CD8-positive, alpha-beta memory T cell (primary cell): ENCODE measurements at regions of chr17 and their contacts with region 1.

Region 1: DNA sequence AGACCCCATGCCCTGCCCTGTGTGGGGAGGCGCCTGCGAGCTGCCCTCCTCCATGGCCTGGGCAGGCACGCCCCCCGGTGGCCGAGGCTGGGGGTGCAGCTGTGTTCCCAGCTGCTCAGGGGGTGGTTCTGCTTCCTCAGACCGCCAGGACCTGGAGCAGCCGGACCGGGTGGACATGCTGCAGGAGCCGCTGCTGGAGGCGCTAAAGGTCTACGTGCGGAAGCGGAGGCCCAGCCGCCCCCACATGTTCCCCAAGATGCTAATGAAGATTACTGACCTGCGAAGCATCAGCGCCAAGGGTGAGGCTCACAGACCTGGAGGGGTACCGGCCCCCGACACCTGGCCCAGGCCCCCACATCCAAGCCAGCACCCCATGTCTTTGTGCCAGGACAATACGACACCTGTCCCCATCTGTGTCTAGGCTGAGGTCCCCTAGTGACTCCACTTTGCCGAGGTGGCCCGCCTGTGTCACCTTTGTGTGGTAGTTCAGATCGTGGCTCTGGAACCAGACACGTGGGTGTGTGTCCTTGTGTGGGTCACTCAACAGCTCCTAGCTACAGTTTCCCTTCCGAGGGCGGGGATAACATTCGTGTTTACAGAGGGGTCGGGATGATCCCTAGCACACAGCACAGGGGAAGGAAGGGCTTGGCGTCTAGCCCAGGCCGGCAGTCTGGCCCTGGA is 9.3 kb downstream of the GJD3 start:
- DNase-seq: peak; percentile 63 to 82 (median 71)
- H3K4me3 ChIP-seq: no peak overlapping the region
- H3K4me3 Mint-ChIP-seq: peak overlapping the region in 1 of 7 donors; percentile 32
- H3K27ac ChIP-seq: no peak overlapping the region
- H3K27ac Mint-ChIP-seq: peak overlapping the region in 6 of 8 donors; percentile 19 to 75 (median 41)
- H3K4me1 ChIP-seq: no peaks in the 10 kb centered on the region
- H3K4me1 Mint-ChIP-seq: peaks cover 14 to 20% (median 17%) of the 10 kb centered on the region in 3 donors
- H3K27me3 ChIP-seq: no peaks in the 10 kb centered on the region
- H3K27me3 Mint-ChIP-seq: peaks cover 0 to 4% of the 10 kb centered on the region in 2 donors

Region 2: DNA sequence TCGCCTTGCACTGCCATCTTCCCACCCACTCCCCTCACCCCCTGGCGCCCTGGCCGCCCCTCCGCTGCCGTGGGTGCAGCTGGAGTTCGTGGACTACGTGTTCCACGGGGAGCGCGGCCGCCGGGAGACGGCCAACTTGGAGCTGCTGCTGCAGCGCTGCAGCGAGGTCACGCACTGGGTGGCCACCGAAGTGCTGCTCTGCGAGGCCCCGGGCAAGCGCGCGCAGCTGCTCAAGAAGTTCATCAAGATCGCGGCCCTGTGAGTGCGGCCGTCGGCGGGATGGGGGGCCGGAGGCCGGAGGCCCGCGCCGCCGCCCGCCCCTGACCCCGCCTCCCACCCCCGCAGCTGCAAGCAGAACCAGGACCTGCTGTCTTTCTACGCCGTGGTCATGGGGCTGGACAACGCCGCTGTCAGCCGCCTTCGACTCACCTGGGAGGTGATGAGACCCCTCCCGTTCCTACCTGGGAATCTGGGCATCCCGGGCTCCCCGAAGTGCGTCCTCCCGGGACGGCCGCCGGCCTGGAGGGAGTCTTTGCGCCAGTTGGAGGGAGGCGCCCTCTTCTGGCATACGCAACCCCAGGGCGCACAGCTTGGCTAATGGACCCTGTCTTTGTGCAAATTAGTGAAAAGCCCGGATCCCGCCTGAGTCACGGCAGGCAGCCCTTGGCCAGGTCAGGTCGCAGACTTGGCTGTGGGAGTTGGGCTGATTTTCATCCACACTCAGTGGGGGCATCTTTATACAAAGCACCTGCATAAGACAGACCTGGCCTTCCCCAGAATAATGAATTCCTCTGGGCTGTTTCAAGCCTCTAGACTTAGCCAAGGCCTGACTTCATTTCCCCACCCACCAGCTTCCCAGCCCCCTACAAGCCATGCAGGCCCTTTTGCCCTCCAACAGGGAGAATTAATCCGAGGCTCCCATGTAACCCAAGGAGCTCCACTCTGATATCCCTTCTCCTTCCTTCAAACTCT is 163.7 kb before region 1 on chr17:
- CTCF ChIA-PET with region 1: no interaction called
- POLR2A ChIA-PET with region 1: no interaction called
- DNase-seq: peak; percentile 46 to 75 (median 50)
- H3K4me3 ChIP-seq: peak overlapping the region; percentile 62
- H3K4me3 Mint-ChIP-seq: peak overlapping the region; percentile 84 to 97 (median 92)
- H3K27ac ChIP-seq: no peak overlapping the region
- H3K27ac Mint-ChIP-seq: peak overlapping the region in 2 of 8 donors; percentile 68 to 88
- H3K4me1 ChIP-seq: peaks cover 5% of the 10 kb centered on the region
- H3K4me1 Mint-ChIP-seq: peaks cover 5 to 9% (median 6%) of the 10 kb centered on the region in 3 donors
- H3K27me3 ChIP-seq: no peaks in the 10 kb centered on the region
- H3K27me3 Mint-ChIP-seq: peaks cover 0 to 1% of the 10 kb centered on the region in 2 donors

Region 3: GRCh38 chr17:40279407-40279806 is 75.9 kb before region 1 on chr17:
- CTCF ChIA-PET with region 1: no interaction called
- POLR2A ChIA-PET with region 1: no interaction called
- DNase-seq: no peak
- H3K4me3 ChIP-seq: no peak overlapping the region
- H3K4me3 Mint-ChIP-seq: no peak overlapping the region
- H3K27ac ChIP-seq: no peak overlapping the region
- H3K27ac Mint-ChIP-seq: no peak overlapping the region
- H3K4me1 ChIP-seq: no peaks in the 10 kb centered on the region
- H3K4me1 Mint-ChIP-seq: peaks cover 15 to 32% (median 28%) of the 10 kb centered on the region in 3 donors
- H3K27me3 ChIP-seq: no peaks in the 10 kb centered on the region
- H3K27me3 Mint-ChIP-seq: no peaks in the 10 kb centered on the region

Region 4: GRCh38 chr17:40290629-40291287 is 64.5 kb before region 1 on chr17:
- CTCF ChIA-PET with region 1: interaction called, 17 read pairs
- POLR2A ChIA-PET with region 1: no interaction called
- DNase-seq: no peak
- H3K4me3 ChIP-seq: no peak overlapping the region
- H3K4me3 Mint-ChIP-seq: no peak overlapping the region
- H3K27ac ChIP-seq: no peak overlapping the region
- H3K27ac Mint-ChIP-seq: peak overlapping the region in 2 of 8 donors; percentile 17 to 37
- H3K4me1 ChIP-seq: peaks cover 11% of the 10 kb centered on the region
- H3K4me1 Mint-ChIP-seq: peaks cover 14 to 23% (median 21%) of the 10 kb centered on the region in 3 donors
- H3K27me3 ChIP-seq: no peaks in the 10 kb centered on the region
- H3K27me3 Mint-ChIP-seq: no peaks in the 10 kb centered on the region

Region 5: DNA sequence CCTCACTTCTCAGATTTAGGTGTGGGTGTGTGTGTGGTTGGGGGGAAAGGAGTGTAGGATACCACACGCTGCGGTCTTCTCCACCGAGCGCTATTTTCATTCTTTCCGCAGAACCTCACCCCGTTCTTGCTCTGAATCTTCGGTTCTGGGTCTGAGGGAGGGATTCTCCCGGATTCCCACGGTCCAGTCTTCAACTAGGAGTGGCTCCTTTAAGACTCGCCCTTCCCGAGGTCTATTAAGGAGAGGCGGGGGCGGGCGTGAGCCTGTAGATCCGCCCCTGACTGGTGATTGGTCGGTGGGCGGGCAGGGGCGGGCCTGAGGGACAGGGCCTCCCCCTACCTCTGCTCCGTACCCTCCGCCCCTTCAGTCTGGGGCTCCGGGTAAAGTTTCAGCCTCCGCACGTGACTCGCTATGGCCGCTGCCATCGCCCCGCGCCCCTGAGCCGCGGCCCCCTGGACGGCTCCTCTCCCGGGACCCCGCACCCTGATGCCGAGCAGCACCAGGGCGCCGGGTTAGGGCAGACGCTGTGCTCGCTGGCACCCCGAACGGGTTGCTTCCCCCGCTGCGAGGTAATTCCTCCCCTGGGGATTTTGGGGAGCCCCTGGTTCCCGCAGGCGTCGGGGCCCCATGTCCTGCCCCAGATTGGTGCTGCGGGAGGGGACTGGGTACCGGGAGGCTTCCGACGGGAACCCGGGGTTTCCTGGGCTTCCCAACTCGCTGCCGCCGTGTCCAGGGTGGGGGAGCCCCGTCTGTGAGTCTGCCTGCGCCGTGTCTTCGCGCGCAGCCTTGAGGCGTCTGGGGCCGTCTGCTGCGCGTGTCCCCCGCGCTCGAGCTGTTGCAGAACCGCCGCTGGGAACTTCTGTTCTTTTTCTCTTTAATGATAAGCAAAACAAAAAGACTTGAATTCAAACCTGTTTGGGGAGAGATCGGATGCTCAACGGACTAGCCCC is 37.1 kb before region 1 on chr17:
- CTCF ChIA-PET with region 1: interaction called, 365 read pairs
- POLR2A ChIA-PET with region 1: interaction called, 3 read pairs
- DNase-seq: peak; percentile 89 to 93 (median 90)
- H3K4me3 ChIP-seq: peak overlapping the region; percentile 92
- H3K4me3 Mint-ChIP-seq: peak overlapping the region; percentile 86 to 98 (median 98)
- H3K27ac ChIP-seq: peak overlapping the region; percentile 84
- H3K27ac Mint-ChIP-seq: peak overlapping the region; percentile 98 to 100 (median 100)
- H3K4me1 ChIP-seq: peaks cover 70% of the 10 kb centered on the region
- H3K4me1 Mint-ChIP-seq: peaks cover 57 to 91% (median 86%) of the 10 kb centered on the region in 3 donors
- H3K27me3 ChIP-seq: no peaks in the 10 kb centered on the region
- H3K27me3 Mint-ChIP-seq: peaks cover 0 to 7% of the 10 kb centered on the region in 2 donors

Region 6: DNA sequence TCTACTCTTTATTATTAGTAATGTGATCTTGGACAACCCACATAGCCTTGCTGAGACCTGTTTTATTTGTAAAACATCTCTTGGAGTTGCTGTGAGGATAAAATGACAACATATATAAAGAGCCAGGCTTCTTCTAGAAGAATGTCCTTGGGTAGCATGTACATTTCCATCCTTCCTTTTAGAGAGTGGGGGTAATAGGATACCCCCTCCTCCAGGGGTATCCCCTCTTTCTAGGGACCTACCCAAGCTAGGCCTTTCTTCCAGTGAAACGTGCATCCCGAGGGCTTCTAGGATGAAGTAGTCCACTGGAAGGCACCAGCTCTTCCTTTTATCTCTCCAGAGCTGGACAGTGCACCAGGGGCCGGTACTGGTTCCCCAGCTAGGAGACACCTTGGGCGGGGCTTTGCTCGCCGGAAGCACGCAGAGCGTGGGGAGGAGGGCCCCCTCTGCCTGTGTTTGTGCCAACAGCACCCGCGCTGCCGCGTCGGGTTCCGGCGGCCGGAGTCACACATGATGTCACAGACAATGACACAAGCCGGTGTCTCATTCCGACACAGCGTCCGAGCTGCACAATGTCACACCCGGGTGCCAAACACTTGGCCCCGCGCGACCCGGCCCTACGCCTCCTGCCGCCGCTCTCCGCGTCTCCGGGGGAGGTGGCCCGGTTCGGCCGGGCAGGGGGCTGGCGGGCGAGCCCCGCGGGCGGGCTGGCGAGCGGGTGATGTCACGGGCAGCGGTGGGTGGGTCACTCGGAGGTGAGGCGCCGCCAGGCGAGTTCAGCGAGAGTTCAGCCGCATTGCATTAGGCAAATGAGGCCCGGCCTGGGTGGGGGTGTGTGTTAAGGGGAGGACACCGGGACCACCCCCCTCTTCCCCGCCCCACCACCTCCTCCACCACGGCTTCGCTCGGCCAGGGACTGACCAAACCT is 14.1 kb before region 1 on chr17:
- CTCF ChIA-PET with region 1: interaction called, 21 read pairs
- POLR2A ChIA-PET with region 1: no interaction called
- DNase-seq: peak; percentile 86 to 94 (median 88)
- H3K4me3 ChIP-seq: peak overlapping the region; percentile 37
- H3K4me3 Mint-ChIP-seq: peak overlapping the region; percentile 60 to 92 (median 83)
- H3K27ac ChIP-seq: peak overlapping the region; percentile 67
- H3K27ac Mint-ChIP-seq: peak overlapping the region; percentile 92 to 98 (median 97)
- H3K4me1 ChIP-seq: peaks cover 66% of the 10 kb centered on the region
- H3K4me1 Mint-ChIP-seq: peaks cover 66 to 84% (median 73%) of the 10 kb centered on the region in 3 donors
- H3K27me3 ChIP-seq: no peaks in the 10 kb centered on the region
- H3K27me3 Mint-ChIP-seq: no peaks in the 10 kb centered on the region

Region 7: GRCh38 chr17:40399185-40399584 is 43.9 kb after region 1 on chr17:
- CTCF ChIA-PET with region 1: no interaction called
- POLR2A ChIA-PET with region 1: no interaction called
- DNase-seq: peak in 2 of 5 donors; percentile 26 to 58
- H3K4me3 ChIP-seq: no peak overlapping the region
- H3K4me3 Mint-ChIP-seq: no peak overlapping the region
- H3K27ac ChIP-seq: no peak overlapping the region
- H3K27ac Mint-ChIP-seq: peak overlapping the region in 4 of 8 donors; percentile 61 to 82 (median 78)
- H3K4me1 ChIP-seq: peaks cover 11% of the 10 kb centered on the region
- H3K4me1 Mint-ChIP-seq: peaks cover 5 to 34% (median 26%) of the 10 kb centered on the region in 3 donors
- H3K27me3 ChIP-seq: no peaks in the 10 kb centered on the region
- H3K27me3 Mint-ChIP-seq: no peaks in the 10 kb centered on the region